ENCODE measurements at regions of chr20 and their contacts with region 1.

Region 1: GRCh38 chr20:36861875-36862801 is 13.8 kb upstream of the TLDC2 start:
- DNase-seq: no peak
- ATAC-seq: no peak
- H3K4me3 ChIP-seq: peak overlapping the region; percentile 80
- H3K27ac ChIP-seq: no peak overlapping the region
- H3K4me1 ChIP-seq: peaks cover 26% of the 10 kb centered on the region
- H3K27me3 ChIP-seq: no peaks in the 10 kb centered on the region
- CTCF ChIP-seq: no peak
- EP300 ChIP-seq: no peak
- POLR2A ChIP-seq: no peak
- RAD21 ChIP-seq: no peak

Region 2: GRCh38 chr20:36684747-36685146 is 177.4 kb before region 1 on chr20:
- CTCF ChIA-PET with region 1: no interaction called
- POLR2A ChIA-PET with region 1: no interaction called
- RAD21 ChIA-PET with region 1: no interaction called
- SMC1A ChIA-PET with region 1: no interaction called
- in situ Hi-C with region 1: no loop called
- intact Hi-C with region 1: no loop called
- DNase-seq: no peak
- ATAC-seq: no peak
- H3K4me3 ChIP-seq: no peak overlapping the region
- H3K27ac ChIP-seq: no peak overlapping the region
- H3K4me1 ChIP-seq: no peaks in the 10 kb centered on the region
- H3K27me3 ChIP-seq: no peaks in the 10 kb centered on the region
- CTCF ChIP-seq: no peak
- EP300 ChIP-seq: no peak
- POLR2A ChIP-seq: no peak
- RAD21 ChIP-seq: no peak

Region 3: GRCh38 chr20:36773597-36774390 is 88.3 kb before region 1 on chr20 and contains the start of gene DSN1:
- CTCF ChIA-PET with region 1: interaction called, 7 read pairs
- POLR2A ChIA-PET with region 1: interaction called, 5 read pairs
- RAD21 ChIA-PET with region 1: interaction called, 7 read pairs
- SMC1A ChIA-PET with region 1: interaction called, 6 read pairs
- in situ Hi-C with region 1: no loop called
- intact Hi-C with region 1: loop called (anchors 5 kb)
- DNase-seq: peak; percentile 92
- ATAC-seq: peak; percentile 92
- H3K4me3 ChIP-seq: peak within 1 kb of the TSS; percentile 93
- H3K27ac ChIP-seq: peak within 1 kb of the TSS; percentile 94
- H3K4me1 ChIP-seq: peaks cover 35% of the 10 kb centered on the region
- H3K27me3 ChIP-seq: no peaks in the 10 kb centered on the region
- CTCF ChIP-seq: peak in 2 of 3 experiments; percentile 43 to 59; a peak in 3 of 6 replicates
- EP300 ChIP-seq: no peak
- POLR2A ChIP-seq: peak; percentile 85; the same call in 1 of the 2 replicates
- RAD21 ChIP-seq: 0 out of 2 replicates have a peak, but pooled peaks have one; percentile 29
- polyA plus RNA-seq, gene DSN1: 21.2 to 21.4 TPM

Region 4: GRCh38 chr20:36827474-36827873 is 34.7 kb before region 1 on chr20:
- CTCF ChIA-PET with region 1: interaction called, 349 read pairs
- POLR2A ChIA-PET with region 1: interaction called, 6 read pairs
- RAD21 ChIA-PET with region 1: interaction called, 4 read pairs
- SMC1A ChIA-PET with region 1: interaction called, 3 read pairs
- in situ Hi-C with region 1: no loop called
- intact Hi-C with region 1: loop called (anchors 5 kb)
- DNase-seq: peak; percentile 74
- ATAC-seq: peak; percentile 98
- H3K4me3 ChIP-seq: no peak overlapping the region
- H3K27ac ChIP-seq: peak overlapping the region; percentile 75
- H3K4me1 ChIP-seq: peaks cover 13% of the 10 kb centered on the region
- H3K27me3 ChIP-seq: no peaks in the 10 kb centered on the region
- CTCF ChIP-seq: no peak
- EP300 ChIP-seq: no peak
- POLR2A ChIP-seq: peak; percentile 48; the same call in 1 of the 2 replicates
- RAD21 ChIP-seq: no peak

Region 5: DNA sequence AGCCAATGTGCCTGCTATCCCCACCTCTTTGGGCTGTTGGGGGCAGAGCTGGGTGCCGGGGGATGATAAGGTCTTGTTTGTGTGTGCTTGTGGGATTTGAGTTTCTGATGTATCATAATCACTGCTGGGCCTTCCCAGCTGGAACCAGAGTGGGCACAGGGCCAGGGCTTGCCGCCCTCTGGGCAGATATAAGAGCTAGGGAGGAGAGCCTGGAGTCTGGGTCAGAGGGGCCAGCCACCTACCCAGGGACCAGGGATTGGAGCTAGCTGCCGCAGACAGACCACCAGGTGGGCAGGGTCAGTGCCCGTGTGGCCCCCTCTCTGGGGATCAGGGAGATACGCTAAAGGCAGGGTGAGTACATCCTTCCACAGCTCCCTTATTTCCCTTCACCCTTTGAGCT is 10.7 kb after region 1 on chr20:
- CTCF ChIA-PET with region 1: interaction called, 7 read pairs
- POLR2A ChIA-PET with region 1: interaction called, 11 read pairs
- RAD21 ChIA-PET with region 1: interaction called, 7 read pairs
- SMC1A ChIA-PET with region 1: interaction called, 8 read pairs
- in situ Hi-C with region 1: no loop called
- intact Hi-C with region 1: no loop called
- DNase-seq: no peak
- ATAC-seq: no peak
- H3K4me3 ChIP-seq: no peak overlapping the region
- H3K27ac ChIP-seq: no peak overlapping the region
- H3K4me1 ChIP-seq: peaks cover 37% of the 10 kb centered on the region
- H3K27me3 ChIP-seq: no peaks in the 10 kb centered on the region
- CTCF ChIP-seq: no peak
- EP300 ChIP-seq: no peak
- POLR2A ChIP-seq: no peak
- RAD21 ChIP-seq: no peak

Region 6: DNA sequence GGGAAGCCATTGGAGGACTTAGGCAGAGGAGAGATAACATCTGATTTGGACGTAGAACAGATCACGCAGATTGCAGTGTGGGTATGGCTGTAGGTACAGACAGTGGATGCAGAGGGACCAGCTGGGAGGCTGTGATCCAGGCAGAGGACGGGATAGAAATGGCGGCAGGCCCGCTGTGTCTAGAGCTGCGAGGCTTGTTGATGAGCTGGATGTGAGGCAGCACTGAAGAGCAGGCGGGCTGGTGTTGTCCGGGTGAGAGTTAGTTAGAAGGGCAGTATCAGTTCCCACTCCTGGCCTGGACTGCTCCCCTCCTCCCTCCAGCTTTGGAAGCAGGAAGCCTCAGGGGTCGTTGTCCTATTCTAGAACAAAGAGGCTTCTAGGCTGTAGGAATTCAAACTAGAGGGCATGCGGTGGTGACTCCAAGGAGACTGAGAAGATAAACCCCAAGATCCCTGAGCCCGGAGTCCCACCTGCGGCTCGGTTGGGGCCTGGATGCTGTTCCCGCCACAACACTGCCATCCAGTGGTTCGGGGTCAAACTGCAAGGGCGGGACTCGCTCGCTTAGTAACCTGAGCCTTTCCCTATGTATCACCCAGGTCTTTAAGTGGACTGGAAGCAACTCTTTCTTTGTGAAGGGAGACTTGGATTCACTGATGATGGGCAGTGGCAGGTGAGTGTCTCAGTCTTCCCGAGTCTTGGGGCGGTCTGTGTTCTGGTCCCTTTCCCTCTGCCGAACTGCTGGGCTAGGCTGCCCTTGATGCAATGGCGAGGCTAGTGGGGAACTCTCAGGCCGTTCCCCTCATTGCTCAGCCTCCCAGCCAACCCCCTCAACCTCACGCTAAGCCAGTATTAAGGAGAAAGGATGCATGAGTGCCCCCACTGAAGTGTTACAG is 25.0 kb after region 1 on chr20:
- CTCF ChIA-PET with region 1: interaction called, 26 read pairs
- POLR2A ChIA-PET with region 1: interaction called, 13 read pairs
- RAD21 ChIA-PET with region 1: interaction called, 17 read pairs
- SMC1A ChIA-PET with region 1: interaction called, 52 read pairs
- in situ Hi-C with region 1: no loop called
- intact Hi-C with region 1: no loop called
- DNase-seq: peak; percentile 56
- ATAC-seq: peak; percentile 95
- H3K4me3 ChIP-seq: no peak overlapping the region
- H3K27ac ChIP-seq: 0 out of 2 replicates have a peak overlapping the region, but pooled peaks have one; percentile 9
- H3K4me1 ChIP-seq: peaks cover 9% of the 10 kb centered on the region
- H3K27me3 ChIP-seq: no peaks in the 10 kb centered on the region
- CTCF ChIP-seq: peak; percentile 97 to 99 (median 98)
- EP300 ChIP-seq: no peak
- POLR2A ChIP-seq: no peak
- RAD21 ChIP-seq: peak; percentile 96

Region 7: DNA sequence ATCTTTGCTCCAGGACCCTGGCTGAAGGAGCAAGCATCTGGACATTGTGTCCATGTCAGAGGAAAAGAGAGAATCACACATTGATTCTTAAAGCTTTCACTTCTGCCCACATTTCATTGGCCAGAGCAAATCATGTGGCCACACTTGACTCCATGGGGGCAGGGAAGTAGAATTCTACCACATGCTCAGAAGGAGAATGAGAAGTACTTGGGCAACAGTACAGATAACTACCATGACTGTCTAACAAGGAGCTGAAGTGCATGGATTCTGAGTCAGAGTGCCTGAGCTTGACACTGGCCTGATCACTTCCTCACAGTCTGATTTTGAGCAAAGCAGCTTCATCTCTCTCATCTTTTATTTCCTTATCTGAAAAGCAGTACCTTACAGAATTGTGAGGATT is 360.9 kb after region 1 on chr20:
- CTCF ChIA-PET with region 1: no interaction called
- POLR2A ChIA-PET with region 1: no interaction called
- RAD21 ChIA-PET with region 1: no interaction called
- SMC1A ChIA-PET with region 1: no interaction called
- in situ Hi-C with region 1: no loop called
- intact Hi-C with region 1: no loop called
- DNase-seq: no peak
- ATAC-seq: peak; percentile 84
- H3K4me3 ChIP-seq: no peak overlapping the region
- H3K27ac ChIP-seq: no peak overlapping the region
- H3K4me1 ChIP-seq: no peaks in the 10 kb centered on the region
- H3K27me3 ChIP-seq: no peaks in the 10 kb centered on the region
- CTCF ChIP-seq: no peak
- EP300 ChIP-seq: no peak
- POLR2A ChIP-seq: no peak
- RAD21 ChIP-seq: no peak